PC-9 (cell line): ENCODE measurements at regions of chr6 and their contacts with region 1.

Region 1: GRCh38 chr6:3118353-3119039 is at the start of gene BPHL:
- DNase-seq: peak; percentile 71 to 98
- H3K4me3 ChIP-seq: peak within 1 kb of the TSS; percentile 84
- H3K27ac ChIP-seq: peak within 1 kb of the TSS; percentile 97
- H3K4me1 ChIP-seq: peaks cover 22% of the 10 kb centered on the region
- H3K27me3 ChIP-seq: no peaks in the 10 kb centered on the region
- CTCF ChIP-seq: no peak
- total RNA-seq, gene BPHL: 23.7 and 24.5 TPM in 2 replicates

Region 2: GRCh38 chr6:2876210-2877056 is 242.1 kb before region 1 on chr6:
- CTCF ChIA-PET with region 1: no interaction called
- POLR2A ChIA-PET with region 1: no interaction called
- intact Hi-C with region 1: no loop called
- DNase-seq: peak; percentile 63 to 92
- H3K4me3 ChIP-seq: peak overlapping the region; percentile 49; the same call in 1 of the 2 replicates
- H3K27ac ChIP-seq: peak overlapping the region; percentile 99
- H3K4me1 ChIP-seq: peaks cover 30% of the 10 kb centered on the region
- H3K27me3 ChIP-seq: no peaks in the 10 kb centered on the region
- CTCF ChIP-seq: no peak

Region 3: DNA sequence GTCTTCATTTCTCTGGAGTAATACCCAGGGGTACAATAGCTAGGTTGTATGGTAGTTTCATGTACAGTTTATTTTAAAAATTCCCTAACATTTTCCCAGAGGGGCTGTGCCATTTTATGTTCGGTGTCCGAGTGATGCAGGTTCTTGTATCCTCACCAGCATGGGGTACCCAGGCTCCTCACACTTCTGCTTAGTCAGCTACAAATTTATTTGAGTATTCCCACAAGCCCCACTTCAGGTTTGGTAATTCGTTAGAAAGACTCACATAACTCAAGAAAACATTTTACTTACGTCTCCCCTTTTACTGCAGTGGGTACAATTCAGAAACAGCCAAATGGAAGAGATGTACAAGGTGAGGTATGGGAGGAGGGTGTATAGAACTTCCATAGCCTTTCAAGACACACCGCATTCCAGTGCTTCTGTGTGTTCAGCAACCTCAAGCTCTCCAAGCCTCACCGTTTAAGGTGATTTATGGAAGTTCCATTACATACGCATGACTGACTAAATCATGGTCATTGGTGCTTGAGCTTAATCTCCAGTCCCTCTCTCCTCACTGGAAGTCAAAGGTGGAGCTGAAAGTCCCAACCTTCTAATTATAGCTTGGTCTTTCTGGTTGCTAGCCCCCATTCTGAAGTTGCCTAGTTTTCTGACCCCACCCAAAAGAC is 32.1 kb before region 1 on chr6:
- CTCF ChIA-PET with region 1: interaction called, 22 read pairs
- POLR2A ChIA-PET with region 1: no interaction called
- intact Hi-C with region 1: no loop called
- DNase-seq: no peak
- H3K4me3 ChIP-seq: no peak overlapping the region
- H3K27ac ChIP-seq: no peak overlapping the region
- H3K4me1 ChIP-seq: no peaks in the 10 kb centered on the region
- H3K27me3 ChIP-seq: no peaks in the 10 kb centered on the region
- CTCF ChIP-seq: no peak